ENCODE measurements at regions of chr12 and their contacts with region 1.

Region 1: DNA sequence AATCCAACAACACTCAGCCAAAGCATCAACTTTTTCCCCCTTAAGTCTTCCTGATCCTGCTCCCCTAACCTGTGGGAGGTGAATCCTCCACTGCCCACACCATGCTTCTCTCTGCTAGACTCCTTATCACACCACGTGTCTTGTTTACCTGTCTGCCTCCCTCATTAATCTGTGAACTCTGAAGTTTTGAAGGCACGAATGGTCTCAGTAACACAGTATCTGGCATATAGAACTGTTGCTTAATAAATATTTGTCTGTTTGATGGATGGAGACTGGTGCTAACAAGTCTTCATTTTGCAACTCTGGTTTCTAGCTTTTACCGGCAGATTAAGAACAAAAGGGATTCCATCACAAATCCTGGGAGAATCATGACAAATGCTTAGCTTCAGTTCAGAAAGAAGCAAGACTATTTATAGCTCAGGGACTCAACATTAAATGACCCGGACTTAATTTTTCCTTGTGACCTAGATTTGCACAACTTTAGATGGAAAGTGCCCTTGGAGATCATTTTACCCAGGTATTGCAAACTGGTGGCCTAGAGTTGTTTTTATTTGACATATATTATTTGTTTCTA is 267.4 kb downstream of the APAF1 start:
- H3K4me3 ChIP-seq: no peak overlapping the region
- H3K27ac ChIP-seq: no peak overlapping the region
- H3K4me1 ChIP-seq: no peaks in the 10 kb centered on the region
- CTCF ChIP-seq: no peak

Region 2: DNA sequence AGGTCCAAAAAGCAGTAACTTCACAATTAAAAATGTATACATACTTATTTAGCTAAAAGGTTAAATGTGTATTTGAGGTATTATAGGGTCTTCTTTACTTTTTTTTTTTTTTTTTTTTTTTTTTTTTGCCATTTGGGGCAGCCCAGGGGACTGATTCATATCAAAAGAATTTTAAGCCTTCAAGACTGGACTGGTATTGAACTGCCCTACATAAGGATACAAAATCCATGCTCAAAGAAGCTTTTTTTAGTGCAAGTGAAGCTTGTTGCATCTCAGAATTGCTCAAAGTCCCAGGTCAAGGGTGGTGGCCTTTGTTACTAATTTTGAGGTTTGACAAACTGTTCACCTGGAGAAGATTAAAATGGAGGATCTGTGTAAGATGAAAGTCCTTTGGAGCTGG is 143.4 kb before region 1 on chr12:
- CTCF ChIA-PET with region 1: no interaction called
- POLR2A ChIA-PET with region 1: interaction called, 10 read pairs
- H3K4me3 ChIP-seq: no peak overlapping the region
- H3K27ac ChIP-seq: no peak overlapping the region
- H3K4me1 ChIP-seq: peaks cover 14% of the 10 kb centered on the region; the same call in 1 of the 2 replicates
- CTCF ChIP-seq: no peak

Region 3: GRCh38 chr12:98856897-98857540 is 55.5 kb before region 1 on chr12:
- CTCF ChIA-PET with region 1: no interaction called
- POLR2A ChIA-PET with region 1: no interaction called
- H3K4me3 ChIP-seq: no peak overlapping the region
- H3K27ac ChIP-seq: no peak overlapping the region
- H3K4me1 ChIP-seq: no peaks in the 10 kb centered on the region
- CTCF ChIP-seq: no peak

Region 4: DNA sequence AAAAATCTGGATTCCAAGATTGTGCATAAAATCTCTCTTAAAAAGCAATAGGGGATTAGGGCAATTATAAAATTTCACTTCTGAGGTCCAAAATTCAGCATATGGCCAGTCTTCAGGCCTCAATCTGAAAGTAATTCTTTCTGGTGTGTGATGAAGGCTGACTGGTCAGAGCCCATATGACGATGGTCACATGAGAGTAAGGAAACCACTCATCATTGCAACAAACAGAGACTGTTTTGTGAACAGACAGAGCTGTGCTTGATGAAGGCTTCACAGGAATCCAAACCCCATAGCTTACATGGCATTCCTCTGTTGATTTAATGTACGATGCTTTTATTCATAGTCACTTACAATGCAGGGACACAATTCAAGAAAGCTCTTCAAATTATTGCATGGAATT is 29.3 kb before region 1 on chr12:
- CTCF ChIA-PET with region 1: no interaction called
- POLR2A ChIA-PET with region 1: no interaction called
- H3K4me3 ChIP-seq: no peak overlapping the region
- H3K27ac ChIP-seq: no peak overlapping the region
- H3K4me1 ChIP-seq: no peaks in the 10 kb centered on the region
- CTCF ChIP-seq: no peak

Measured in HEK293 (cell line).